Dorsolateral prefrontal cortex (tissue), 120 donors: ENCODE measurements at regions of chr5 and their contacts with region 1.

Region 1: DNA sequence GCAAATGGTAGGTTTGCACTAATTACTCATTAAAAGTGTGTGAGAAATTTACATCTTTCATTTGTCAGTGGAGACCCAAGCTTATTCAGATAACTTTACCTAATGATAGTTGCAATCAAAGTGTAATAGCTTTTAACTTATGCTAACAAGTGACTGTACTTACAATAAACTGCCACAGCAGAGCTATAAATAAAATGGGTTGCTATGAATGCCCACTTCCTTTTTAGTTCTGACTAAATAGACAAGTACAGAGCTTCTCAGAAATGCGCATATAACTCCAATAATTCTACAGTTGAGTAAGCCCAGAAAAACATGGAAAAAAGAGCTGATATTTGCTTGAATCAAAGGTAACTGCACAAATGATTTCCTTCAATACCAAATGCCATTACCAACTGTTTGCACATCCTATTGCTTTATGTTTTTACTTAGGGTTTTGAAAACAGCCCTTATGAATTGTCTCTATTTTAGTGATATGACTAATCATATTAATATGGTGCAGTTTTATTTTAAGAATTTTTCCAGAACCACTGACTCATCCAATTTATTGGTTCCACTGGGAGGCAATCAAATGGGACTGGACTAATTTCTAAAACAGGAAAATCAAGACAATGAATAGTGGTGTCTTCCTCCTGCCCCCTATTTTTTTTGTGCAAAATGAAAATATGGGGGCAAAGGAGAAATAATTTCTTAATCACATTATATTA is 84.1 kb downstream of the PPP2R2B start:
- DNase-seq: no peak
- H3K4me3 ChIP-seq: no peak overlapping the region
- H3K27ac ChIP-seq: peak overlapping the region in 4 of 59 donors; percentile 2 to 45 (median 16)
- H3K27me3 ChIP-seq: no peaks in the 10 kb centered on the region
- CTCF ChIP-seq: no peak

Region 2: DNA sequence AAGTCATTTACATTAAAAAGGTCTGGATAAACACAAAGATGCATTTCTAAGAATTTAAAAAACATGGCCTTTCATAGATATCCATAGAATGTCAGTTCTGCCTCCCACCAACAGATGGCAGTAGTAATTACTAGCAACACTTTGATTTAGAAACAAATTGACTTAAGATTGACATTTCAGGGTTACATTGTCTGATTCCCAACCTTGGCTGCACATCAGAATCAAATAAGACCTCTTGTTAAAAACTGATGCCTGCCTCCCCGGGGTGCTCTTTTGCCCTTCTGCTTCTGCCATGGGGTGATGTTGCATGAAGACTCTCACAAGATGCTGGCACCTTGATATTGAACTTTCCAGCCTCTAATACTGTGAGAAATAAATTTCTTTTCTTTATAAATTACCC is 132.2 kb before region 1 on chr5:
- intact Hi-C with region 1: loop called in 1 of 2 experiments (anchors 10 kb)
- DNase-seq: no peak
- H3K4me3 ChIP-seq: no peak overlapping the region
- H3K27ac ChIP-seq: peak overlapping the region in 11 of 59 donors; percentile 1 to 42 (median 11)
- H3K27me3 ChIP-seq: no peaks in the 10 kb centered on the region
- CTCF ChIP-seq: peak in 54 of 56 donors; percentile 24 to 81 (median 52)